ENCODE measurements at regions of chr2 and their contacts with region 1.

Region 1: GRCh38 chr2:43226558-43226954 is at the start of gene ZFP36L2:
- DNase-seq: peak; percentile 98
- total RNA-seq, gene ZFP36L2: 41.4 TPM

Region 2: DNA sequence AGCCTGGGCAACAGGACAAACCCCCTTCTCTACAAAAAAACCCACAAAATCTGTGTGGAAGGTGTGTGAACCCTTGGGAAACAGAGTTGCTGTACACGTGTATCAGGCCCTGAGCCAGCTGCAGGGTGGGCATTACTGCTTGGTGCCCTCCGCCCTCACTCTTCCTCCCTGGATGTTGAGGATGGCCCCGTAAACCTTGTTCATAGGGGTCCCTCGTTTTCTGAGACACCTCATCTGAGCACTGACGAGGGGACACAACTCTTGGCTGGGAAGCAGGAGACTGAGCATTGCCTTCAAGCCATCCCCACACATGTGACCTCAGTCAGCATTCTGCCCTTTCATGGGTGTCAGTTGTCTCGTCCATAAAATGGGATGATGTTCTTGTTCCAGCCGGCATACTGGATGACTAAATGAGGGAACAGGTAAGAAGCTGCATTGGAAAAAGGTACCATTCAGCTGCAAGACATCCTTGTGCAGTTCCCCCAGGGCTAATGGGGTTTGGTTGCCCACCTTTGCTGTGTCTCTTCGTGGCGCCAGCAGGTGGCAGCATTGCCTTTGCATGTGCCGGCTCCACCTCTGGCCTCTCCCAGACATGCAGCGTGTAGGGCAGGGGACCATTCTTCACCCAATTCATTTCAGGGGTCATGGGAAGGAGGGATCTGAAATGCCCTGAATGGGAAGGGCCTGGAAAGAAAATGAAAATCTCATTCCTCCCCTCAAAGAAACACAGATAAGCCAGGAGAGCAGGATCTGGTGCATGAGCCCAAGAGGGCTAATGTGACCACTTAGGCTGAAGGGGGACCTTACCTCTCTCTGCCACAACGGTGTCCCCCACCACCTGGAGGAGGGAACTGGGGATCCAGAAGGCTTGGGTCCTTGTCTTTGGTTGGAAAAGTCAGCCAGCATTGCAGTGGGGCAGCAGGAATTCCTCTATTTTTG is 397.8 kb before region 1 on chr2:
- intact Hi-C with region 1: loop called (anchors 2 kb)
- DNase-seq: peak; percentile 89

Region 3: DNA sequence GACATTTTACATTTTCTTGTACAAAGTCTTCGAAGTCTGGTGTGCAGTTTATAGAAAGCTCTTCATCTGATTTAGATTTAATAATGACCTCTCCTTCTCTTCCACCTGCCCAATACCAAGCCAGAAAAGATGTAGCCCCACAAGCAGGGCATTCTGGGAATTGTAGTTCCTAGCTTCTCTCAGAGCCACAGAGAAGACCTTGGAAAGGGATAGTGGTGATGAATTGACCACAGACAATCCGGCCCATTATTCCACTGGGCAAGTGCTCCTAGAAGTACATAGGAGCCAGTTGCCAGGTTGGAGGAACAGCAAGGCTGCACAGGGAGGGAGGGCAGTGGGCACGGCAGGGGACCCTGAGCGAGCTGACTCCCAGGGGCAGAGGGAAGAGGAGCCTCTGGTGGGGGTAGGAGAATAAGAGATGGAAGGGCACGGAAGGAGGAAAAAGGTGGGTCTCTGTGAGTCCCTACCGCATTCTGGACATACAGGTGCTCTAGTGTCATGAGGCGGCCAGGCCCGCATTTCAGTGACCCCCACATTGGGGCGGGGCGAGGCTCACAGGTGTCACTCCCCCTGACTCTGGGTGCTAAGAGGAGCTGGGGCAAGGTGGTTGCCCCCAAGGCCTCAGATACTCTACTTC is 281.7 kb before region 1 on chr2:
- intact Hi-C with region 1: loop called (anchors 2 kb)
- DNase-seq: no peak

Region 4: GRCh38 chr2:43024515-43025011 is 202.0 kb before region 1 on chr2:
- intact Hi-C with region 1: loop called (anchors 2 kb)
- DNase-seq: no peak

Region 5: DNA sequence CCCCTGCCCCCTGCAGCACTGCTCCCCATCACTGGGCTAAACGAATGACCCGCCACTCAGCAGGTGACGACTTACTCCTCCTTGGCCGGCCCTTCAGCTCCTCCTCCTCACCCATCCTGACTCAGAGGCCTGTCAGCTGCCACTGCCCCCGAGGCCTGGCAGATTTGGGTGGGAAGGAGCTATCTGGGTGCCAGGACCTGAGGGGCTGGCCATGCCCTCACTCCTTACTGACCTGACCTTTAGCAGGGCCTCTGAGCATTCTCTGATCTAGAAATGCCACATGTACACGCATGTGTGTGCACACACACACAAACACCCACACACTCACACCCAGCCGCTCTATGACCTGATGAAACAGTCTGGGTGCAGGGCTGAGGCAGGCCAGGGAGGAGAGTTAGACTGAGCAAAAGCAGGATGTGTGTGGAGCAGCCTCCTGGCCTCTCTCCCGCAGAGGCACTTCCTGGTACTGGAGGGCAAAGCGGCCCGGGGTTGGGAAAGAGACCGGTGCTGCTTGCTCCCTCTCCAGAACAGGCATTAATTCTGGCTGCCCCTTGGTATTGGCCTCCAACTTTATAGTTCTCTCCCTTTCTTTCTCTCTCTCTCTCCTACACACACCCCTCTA is 68.2 kb before region 1 on chr2:
- intact Hi-C with region 1: loop called (anchors 2 kb)
- DNase-seq: no peak

Region 6: GRCh38 chr2:43333656-43334144 is 107.1 kb after region 1 on chr2:
- intact Hi-C with region 1: loop called (anchors 2 kb)
- DNase-seq: no peak